ENCODE measurements at regions of chr2 and their contacts with region 1.

Region 1: DNA sequence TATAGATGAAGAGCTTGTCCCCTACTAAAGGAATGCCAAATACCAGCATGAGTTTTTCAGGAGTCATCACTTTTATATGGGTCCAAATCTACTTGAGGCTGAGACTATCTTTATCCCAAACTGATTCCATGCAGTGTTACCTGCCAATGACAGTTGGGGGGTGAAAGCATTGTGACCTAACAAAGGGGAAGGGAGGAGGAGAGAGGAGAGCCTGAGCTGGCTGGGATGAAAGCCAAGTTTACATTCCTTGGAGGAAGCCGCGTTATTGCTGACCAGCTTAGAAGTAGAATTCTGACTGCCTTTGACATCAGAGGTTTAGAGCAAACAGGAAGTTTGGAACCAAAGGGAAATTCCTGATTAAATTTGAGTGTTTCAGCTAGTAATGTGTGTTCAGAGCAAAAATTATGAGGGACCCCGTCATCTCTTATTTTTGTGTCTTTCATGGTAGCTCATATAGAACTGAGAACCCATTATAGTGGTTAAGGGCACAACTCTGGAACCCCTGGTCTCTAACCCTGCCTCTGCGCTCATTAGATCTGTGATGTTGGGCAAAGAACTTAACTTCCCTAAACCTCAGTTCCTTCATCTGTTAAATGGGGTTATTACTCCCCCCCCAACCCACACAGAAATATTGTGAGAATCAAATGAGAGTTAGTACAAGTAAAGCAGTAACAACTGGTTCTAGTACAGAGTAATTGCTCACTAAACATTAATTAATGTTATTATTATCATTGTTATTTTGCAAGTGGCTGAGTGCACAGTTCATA is 199.3 kb upstream of the EPAS1 start:
- DNase-seq: peak; percentile 97
- ATAC-seq: peak; percentile 83
- H3K4me3 ChIP-seq: no peak overlapping the region
- H3K27ac ChIP-seq: peak overlapping the region; percentile 95
- H3K4me1 ChIP-seq: peaks cover 25% of the 10 kb centered on the region
- H3K27me3 ChIP-seq: no peaks in the 10 kb centered on the region
- CTCF ChIP-seq: no peak

Region 2: DNA sequence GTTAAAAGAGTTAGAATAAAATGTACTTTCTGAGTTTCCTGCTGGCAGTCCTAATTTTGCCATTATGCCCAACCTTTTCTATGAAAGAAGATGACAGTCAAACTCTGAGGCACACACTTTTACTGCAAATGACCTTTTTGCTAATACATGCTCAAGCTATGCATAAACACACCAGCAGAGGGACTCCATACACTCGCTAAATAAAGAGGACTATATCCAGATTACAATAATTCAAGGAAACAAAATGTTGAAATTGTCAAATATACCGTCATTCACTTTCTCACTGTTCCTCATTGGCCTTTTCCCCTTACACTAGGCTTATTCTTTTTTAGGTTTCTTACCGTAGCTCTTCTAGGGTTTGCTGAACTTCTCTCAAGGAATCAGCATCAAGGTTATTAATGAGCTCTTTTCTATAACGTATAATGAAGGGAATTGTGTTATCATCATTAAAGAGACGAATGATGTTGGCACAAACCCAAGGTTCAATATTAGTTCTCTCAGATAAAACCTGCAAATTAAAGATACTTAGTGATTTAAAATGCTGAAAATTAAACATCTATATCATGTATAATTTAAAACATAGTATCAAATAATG is 512.5 kb before region 1 on chr2:
- CTCF ChIA-PET with region 1: no interaction called
- POLR2A ChIA-PET with region 1: no interaction called
- intact Hi-C with region 1: no loop called
- DNase-seq: peak; percentile 72
- ATAC-seq: peak; percentile 74
- H3K4me3 ChIP-seq: no peak overlapping the region
- H3K27ac ChIP-seq: no peak overlapping the region
- H3K4me1 ChIP-seq: no peaks in the 10 kb centered on the region
- H3K27me3 ChIP-seq: no peaks in the 10 kb centered on the region
- CTCF ChIP-seq: peak; percentile 83

Region 3: DNA sequence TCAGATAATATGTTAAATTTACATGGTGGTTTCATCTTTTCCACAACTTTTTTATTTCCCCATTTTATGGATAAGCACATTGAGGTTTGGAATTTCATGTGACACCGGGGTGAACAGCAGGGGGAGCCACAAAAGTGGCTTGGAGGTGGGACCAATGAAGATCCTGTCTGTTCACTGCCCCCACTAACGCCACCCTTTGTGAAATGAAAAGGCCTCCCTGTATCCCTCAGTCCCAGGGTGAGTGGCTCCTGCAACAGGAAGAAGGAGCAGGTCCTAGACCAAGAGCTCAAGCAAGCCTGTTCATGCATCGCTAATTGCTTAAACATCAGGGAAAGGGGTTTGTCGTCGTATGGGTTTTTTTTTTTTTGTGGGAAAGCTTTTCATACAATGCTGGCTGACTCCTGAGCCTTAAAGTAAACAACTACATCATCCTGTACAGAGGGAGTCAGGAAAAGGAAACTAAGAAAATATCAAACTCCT is 68.5 kb before region 1 on chr2:
- CTCF ChIA-PET with region 1: no interaction called
- POLR2A ChIA-PET with region 1: no interaction called
- intact Hi-C with region 1: no loop called
- DNase-seq: peak; percentile 56
- ATAC-seq: peak; percentile 75
- H3K4me3 ChIP-seq: no peak overlapping the region
- H3K27ac ChIP-seq: 0 out of 2 replicates have a peak overlapping the region, but pooled peaks have one; percentile 7
- H3K4me1 ChIP-seq: peaks cover 28% of the 10 kb centered on the region
- H3K27me3 ChIP-seq: no peaks in the 10 kb centered on the region
- CTCF ChIP-seq: peak; percentile 63

Region 4: GRCh38 chr2:46073540-46074018 is 24.3 kb before region 1 on chr2:
- CTCF ChIA-PET with region 1: no interaction called
- POLR2A ChIA-PET with region 1: no interaction called
- intact Hi-C with region 1: loop called (anchors 1 kb)
- DNase-seq: peak; percentile 95
- ATAC-seq: peak; percentile 93
- H3K4me3 ChIP-seq: peak overlapping the region; percentile 52
- H3K27ac ChIP-seq: peak overlapping the region; percentile 96
- H3K4me1 ChIP-seq: peaks cover 43% of the 10 kb centered on the region
- H3K27me3 ChIP-seq: no peaks in the 10 kb centered on the region
- CTCF ChIP-seq: no peak

Measured in PC-3 (cell line).